Activated T-helper 2 cell treated with anti-CD3 and anti-CD28 coated beads, Interferon-gamma antibody, Interleukin-2, Interleukin-4, amounts not matched to agents 10 μg/mL and 5 μg/mL and 100 μg/mL, durations not matched to agents 14 hours and 24 hours and 36 hours (primary cell): ENCODE measurements at regions of chr20 and their contacts with region 1.

Region 1: DNA sequence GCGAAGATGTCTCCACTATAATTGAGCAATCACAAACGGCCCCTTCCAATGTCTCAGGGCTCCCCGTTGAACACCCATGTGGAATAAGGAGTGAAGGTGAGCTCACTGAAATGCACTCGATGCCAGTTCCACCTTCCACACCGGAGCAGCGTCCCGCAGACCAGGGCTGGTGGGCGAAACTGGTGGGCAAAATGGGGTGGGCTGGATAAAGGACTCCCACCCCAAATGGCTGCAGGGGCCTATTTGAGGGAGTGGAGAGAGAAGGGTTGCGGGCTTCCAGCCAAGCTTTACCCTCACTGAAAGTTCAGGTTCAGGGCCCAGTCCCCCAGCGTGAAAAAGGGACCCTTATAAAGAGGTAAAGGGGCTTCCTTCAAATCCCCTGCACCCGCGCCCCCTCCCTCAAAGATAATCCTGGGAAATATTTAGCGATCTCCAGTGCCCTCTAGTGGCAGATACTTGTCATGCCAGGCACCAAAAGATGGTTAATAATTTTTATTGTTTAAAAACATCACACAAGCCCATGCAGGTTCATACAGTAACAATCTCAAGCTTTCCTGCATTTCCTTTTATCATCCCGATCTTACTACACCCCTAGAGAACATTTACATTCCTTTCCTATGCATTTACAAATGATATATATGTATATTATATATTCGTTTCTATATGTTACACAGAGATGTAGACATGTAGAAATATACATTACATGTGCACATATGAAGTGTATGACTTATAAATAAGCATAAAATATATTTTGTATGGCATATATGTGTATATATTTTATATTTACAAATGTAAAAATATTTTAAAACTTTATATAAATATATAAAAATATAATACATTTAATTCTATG is 58.2 kb upstream of the NKX2-2 start:
- DNase-seq: no peak
- H3K4me3 Mint-ChIP-seq: no peak overlapping the region
- H3K27ac Mint-ChIP-seq: no peak overlapping the region
- H3K4me1 Mint-ChIP-seq: peaks cover 7% of the 10 kb centered on the region
- H3K27me3 Mint-ChIP-seq: peaks cover 27% of the 10 kb centered on the region

Region 2: GRCh38 chr20:21235484-21236445 is 336.3 kb before region 1 on chr20:
- intact Hi-C with region 1: loop called (anchors 5 kb)
- DNase-seq: peak; percentile 40
- H3K4me3 Mint-ChIP-seq: no peak overlapping the region
- H3K27ac Mint-ChIP-seq: no peak overlapping the region
- H3K4me1 Mint-ChIP-seq: peaks cover 3% of the 10 kb centered on the region
- H3K27me3 Mint-ChIP-seq: no peaks in the 10 kb centered on the region

Region 3: DNA sequence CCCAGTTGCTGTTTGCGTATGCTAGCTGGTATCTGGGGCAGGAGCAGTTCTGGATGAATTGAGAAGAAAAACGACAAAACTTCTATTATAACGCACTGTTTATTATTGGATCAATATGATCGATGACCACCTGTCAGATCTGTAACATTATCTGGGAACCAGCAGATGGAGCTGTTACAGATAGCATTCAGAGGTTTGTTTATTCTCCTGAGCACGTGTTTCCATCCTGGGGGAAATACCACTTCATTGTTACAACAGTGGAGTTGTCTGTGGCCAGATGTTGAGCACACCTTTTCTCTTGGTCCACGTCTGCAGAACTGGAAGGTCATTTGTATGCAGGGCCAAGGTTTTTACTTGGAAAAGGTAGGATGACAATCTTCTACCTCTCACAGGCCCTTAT is 42.2 kb before region 1 on chr20:
- intact Hi-C with region 1: loop called (anchors 1 kb)
- DNase-seq: no peak
- H3K4me3 Mint-ChIP-seq: no peak overlapping the region
- H3K27ac Mint-ChIP-seq: no peak overlapping the region
- H3K4me1 Mint-ChIP-seq: peaks cover 3% of the 10 kb centered on the region
- H3K27me3 Mint-ChIP-seq: peaks cover 68% of the 10 kb centered on the region

Region 4: GRCh38 chr20:21548390-21549035 is 23.6 kb before region 1 on chr20:
- intact Hi-C with region 1: no loop called
- DNase-seq: peak; percentile 48
- H3K4me3 Mint-ChIP-seq: peak overlapping the region; percentile 5
- H3K27ac Mint-ChIP-seq: peak overlapping the region; percentile 77
- H3K4me1 Mint-ChIP-seq: peaks cover 27% of the 10 kb centered on the region
- H3K27me3 Mint-ChIP-seq: peaks cover 2% of the 10 kb centered on the region

Region 5: GRCh38 chr20:21559305-21559704 is 12.8 kb before region 1 on chr20:
- intact Hi-C with region 1: loop called (anchors 1 kb)
- DNase-seq: peak; percentile 15
- H3K4me3 Mint-ChIP-seq: no peak overlapping the region
- H3K27ac Mint-ChIP-seq: no peak overlapping the region
- H3K4me1 Mint-ChIP-seq: peaks cover 33% of the 10 kb centered on the region
- H3K27me3 Mint-ChIP-seq: peaks cover 9% of the 10 kb centered on the region